ENCODE measurements at regions of chr14 and their contacts with region 1.

Region 1: DNA sequence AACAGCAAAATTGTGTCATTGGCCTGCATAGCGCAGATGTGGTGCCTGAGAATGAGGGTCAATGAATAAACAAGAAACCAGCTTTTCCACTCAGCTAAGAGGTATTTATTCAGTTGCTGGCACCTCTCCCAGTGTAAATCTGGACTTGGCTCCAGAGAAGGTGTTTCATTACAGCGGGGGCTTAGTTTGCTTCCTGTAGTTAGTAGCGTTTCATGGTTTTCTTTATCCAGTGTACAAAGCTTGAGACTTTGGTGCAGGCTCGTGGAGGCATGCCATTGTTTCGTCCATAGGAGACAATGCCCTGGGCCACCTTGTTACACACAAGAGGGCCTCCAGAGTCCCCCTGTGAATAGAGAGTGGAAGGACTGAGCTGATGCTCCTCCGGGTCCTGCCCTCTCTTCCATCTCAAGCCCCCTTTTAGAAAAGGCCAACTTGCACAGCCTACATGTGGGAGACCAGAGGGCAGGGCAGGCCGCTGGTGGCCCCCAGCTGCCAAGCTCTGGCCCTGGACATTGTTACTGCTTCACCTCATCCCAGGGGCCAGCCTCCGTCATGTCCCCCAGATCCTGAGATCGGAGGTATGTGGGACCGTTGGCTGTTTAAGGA is 3.0 kb downstream of the GZMB start:
- DNase-seq: no peak
- H3K4me3 Mint-ChIP-seq: peak overlapping the region; percentile 79
- H3K27ac Mint-ChIP-seq: peak overlapping the region; percentile 78
- H3K4me1 Mint-ChIP-seq: peaks cover 9% of the 10 kb centered on the region
- H3K27me3 Mint-ChIP-seq: no peaks in the 10 kb centered on the region

Region 2: DNA sequence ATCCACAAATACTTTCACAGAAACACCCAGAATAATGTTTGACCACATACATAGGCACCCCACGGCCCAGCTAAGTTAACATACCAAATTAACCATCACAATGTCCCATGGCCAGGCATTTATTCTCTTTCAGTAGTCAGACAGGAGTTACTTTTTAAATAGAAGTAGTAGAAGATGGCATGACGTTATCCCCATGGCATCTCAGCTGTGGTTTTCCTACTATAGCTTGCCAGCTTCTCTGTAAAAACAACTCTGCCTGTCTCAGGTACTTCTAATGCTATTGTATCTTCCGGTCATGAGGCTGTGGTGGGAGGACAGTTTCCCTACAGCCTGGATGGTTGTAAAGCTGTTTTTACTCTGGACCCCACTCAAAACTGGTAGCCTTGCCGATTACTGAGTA is 74.2 kb before region 1 on chr14:
- CTCF ChIA-PET with region 1: no interaction called
- POLR2A ChIA-PET with region 1: no interaction called
- intact Hi-C with region 1: no loop called
- DNase-seq: no peak
- H3K4me3 Mint-ChIP-seq: no peak overlapping the region
- H3K27ac Mint-ChIP-seq: no peak overlapping the region
- H3K4me1 Mint-ChIP-seq: no peaks in the 10 kb centered on the region
- H3K27me3 Mint-ChIP-seq: peaks cover 4% of the 10 kb centered on the region

Region 3: GRCh38 chr14:24612196-24612595 is 18.8 kb before region 1 on chr14:
- CTCF ChIA-PET with region 1: no interaction called
- POLR2A ChIA-PET with region 1: no interaction called
- intact Hi-C with region 1: loop called (anchors 2 kb)
- DNase-seq: no peak
- H3K4me3 Mint-ChIP-seq: no peak overlapping the region
- H3K27ac Mint-ChIP-seq: no peak overlapping the region
- H3K4me1 Mint-ChIP-seq: peaks cover 34% of the 10 kb centered on the region
- H3K27me3 Mint-ChIP-seq: no peaks in the 10 kb centered on the region

Region 4: GRCh38 chr14:24665440-24665991 is 34.5 kb after region 1 on chr14:
- CTCF ChIA-PET with region 1: interaction called, 3 read pairs
- POLR2A ChIA-PET with region 1: interaction called, 4 read pairs
- intact Hi-C with region 1: loop called (anchors 1 kb)
- DNase-seq: peak; percentile 59
- H3K4me3 Mint-ChIP-seq: peak overlapping the region; percentile 25
- H3K27ac Mint-ChIP-seq: peak overlapping the region; percentile 57
- H3K4me1 Mint-ChIP-seq: peaks cover 74% of the 10 kb centered on the region
- H3K27me3 Mint-ChIP-seq: no peaks in the 10 kb centered on the region

Region 5: GRCh38 chr14:24673534-24674203 is 42.7 kb after region 1 on chr14:
- CTCF ChIA-PET with region 1: interaction called, 13 read pairs
- POLR2A ChIA-PET with region 1: interaction called, 14 read pairs
- intact Hi-C with region 1: loop called (anchors 1 kb)
- DNase-seq: peak; percentile 83
- H3K4me3 Mint-ChIP-seq: peak overlapping the region; percentile 62
- H3K27ac Mint-ChIP-seq: peak overlapping the region; percentile 94
- H3K4me1 Mint-ChIP-seq: peaks cover 79% of the 10 kb centered on the region
- H3K27me3 Mint-ChIP-seq: no peaks in the 10 kb centered on the region

Region 6: DNA sequence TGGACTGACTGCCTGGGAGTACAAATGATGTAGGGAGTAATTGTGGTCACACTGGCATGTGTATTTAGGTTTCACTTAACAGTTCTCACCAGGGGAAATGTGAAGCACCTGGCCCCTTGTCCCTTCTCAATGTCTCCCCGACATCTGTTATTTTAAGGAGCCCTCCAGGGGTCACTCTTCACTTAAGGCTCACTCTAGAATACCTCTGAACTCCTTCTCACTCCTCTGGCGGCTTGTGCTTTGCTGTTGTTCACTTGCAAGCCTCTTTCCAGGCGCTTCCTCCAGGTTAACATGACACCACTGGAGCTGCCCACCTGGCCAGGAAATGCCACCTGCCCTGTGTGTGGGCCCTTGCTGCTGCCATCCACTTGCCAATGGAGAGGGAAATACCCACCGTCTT is 59.5 kb after region 1 on chr14:
- CTCF ChIA-PET with region 1: interaction called, 4 read pairs
- POLR2A ChIA-PET with region 1: no interaction called
- intact Hi-C with region 1: loop called (anchors 1 kb)
- DNase-seq: no peak
- H3K4me3 Mint-ChIP-seq: no peak overlapping the region
- H3K27ac Mint-ChIP-seq: no peak overlapping the region
- H3K4me1 Mint-ChIP-seq: peaks cover 5% of the 10 kb centered on the region
- H3K27me3 Mint-ChIP-seq: peaks cover 4% of the 10 kb centered on the region

Measured in activated CD4-positive, alpha-beta memory T cell treated with anti-CD3 and anti-CD28 coated beads for 36 hours (primary cell).